PC-9 (cell line): ENCODE measurements at regions of chr4 and their contacts with region 1.

Region 1: DNA sequence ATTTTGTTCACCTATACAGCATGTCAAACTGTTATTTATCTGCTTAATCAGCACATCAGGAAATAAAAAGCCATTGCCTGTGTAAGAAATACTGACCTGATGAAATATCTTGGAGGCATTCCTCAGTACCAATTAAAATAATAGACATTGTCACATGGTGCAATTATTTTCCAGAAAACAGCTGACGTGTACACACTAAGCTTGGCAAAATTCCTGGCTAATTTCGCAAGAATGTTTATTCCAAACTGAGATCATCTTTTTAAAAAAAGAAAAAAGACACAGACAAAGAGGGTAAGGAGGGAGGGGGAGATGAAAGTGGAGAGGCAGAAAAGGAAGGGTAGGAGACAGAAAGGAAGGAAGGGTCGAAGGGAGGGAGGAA is 61.9 kb upstream of the NFKB1 start:
- DNase-seq: peak; percentile 3 to 51
- H3K4me3 ChIP-seq: no peak overlapping the region
- H3K27ac ChIP-seq: peak overlapping the region; percentile 26; the same call in 1 of the 2 replicates
- H3K4me1 ChIP-seq: peaks cover 18% of the 10 kb centered on the region
- H3K27me3 ChIP-seq: no peaks in the 10 kb centered on the region
- CTCF ChIP-seq: no peak

Region 2: DNA sequence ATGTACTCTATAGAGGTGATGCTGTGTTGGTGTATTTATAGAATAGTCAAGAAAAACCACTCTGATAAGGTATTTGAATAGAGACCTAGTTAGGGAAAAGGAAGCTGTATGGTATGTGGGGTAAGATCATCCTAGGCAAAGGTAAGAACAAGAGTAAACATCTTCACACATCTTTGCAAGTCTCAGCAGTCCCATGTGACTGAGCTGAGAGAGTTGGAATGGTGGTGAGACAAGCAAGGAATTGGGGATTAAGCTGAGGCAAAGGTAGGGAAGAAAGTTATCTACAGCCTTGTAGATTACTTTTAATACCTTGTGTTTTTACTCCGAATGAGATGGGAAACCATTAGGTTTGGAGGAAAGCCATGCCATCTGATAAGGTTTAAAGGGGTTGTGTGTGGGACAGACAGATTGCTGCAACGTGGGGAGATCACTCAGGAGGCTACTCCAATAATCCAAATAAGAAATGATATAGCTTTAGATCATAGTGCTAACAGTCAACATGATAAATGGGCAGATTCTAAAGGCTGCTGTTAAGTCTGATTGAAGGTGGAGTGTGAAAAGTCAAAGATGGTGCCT is 353.2 kb after region 1 on chr4:
- CTCF ChIA-PET with region 1: no interaction called
- POLR2A ChIA-PET with region 1: no interaction called
- intact Hi-C with region 1: loop called (anchors 10 kb)
- DNase-seq: no peak
- H3K4me3 ChIP-seq: no peak overlapping the region
- H3K27ac ChIP-seq: no peak overlapping the region
- H3K4me1 ChIP-seq: no peaks in the 10 kb centered on the region
- H3K27me3 ChIP-seq: no peaks in the 10 kb centered on the region
- CTCF ChIP-seq: no peak